MCF 10A (cell line): ENCODE measurements at regions of chr10 and their contacts with region 1.

Region 1: DNA sequence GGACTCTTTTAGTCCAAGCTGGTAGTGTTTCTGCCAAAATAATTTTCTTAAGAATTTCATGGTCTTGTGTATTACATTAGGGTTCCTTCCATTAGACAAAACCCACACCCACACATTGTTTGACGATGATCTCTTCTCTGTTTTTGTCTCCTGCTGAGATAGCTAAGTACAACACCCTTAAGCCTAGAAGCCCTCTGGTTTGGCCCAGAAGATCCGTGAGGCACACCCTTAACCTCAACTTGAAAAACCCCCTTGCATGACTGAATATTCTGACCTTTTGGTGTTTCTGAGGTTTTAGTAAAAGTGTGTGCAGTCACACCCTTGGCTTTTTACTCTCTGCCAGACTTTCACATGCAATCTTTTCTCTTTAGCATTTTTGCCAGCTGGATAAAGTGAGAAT is 29.3 kb upstream of the ERCC6 start:
- DNase-seq: peak; percentile 29
- H3K4me3 Mint-ChIP-seq: peak overlapping the region; percentile 65
- H3K27ac Mint-ChIP-seq: peak overlapping the region; percentile 88
- H3K4me1 Mint-ChIP-seq: peaks cover 56% of the 10 kb centered on the region
- H3K27me3 Mint-ChIP-seq: no peaks in the 10 kb centered on the region
- CTCF ChIP-seq: no peak

Region 2: DNA sequence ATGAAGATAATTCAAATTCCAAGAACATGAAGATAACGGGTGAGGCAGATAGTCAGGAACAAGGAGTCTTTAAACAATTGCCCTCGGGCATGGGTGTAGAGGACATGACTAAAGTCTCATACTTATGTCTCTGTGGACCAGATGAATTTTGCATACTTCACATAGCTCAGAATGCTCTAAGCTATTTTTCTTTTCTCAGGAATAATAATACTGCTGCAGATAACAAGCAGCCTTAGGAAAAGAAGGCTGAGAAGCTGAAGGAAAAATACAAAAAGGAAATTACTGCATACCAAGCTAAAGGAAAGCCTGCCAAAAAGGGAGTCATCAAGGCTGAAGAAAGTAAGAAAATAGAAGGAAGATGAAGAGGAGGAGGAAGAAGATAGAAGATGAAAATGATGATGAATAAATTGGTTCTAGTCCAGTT is 16.0 kb before region 1 on chr10:
- CTCF ChIA-PET with region 1: interaction called, 20 read pairs
- POLR2A ChIA-PET with region 1: interaction called, 205 read pairs
- intact Hi-C with region 1: loop called (anchors 2 kb)
- DNase-seq: peak; percentile 72
- H3K4me3 Mint-ChIP-seq: peak overlapping the region; percentile 13
- H3K27ac Mint-ChIP-seq: peak overlapping the region; percentile 82
- H3K4me1 Mint-ChIP-seq: peaks cover 46% of the 10 kb centered on the region
- H3K27me3 Mint-ChIP-seq: no peaks in the 10 kb centered on the region
- CTCF ChIP-seq: no peak

Region 3: GRCh38 chr10:49579621-49580020 is 11.4 kb after region 1 on chr10:
- CTCF ChIA-PET with region 1: no interaction called
- POLR2A ChIA-PET with region 1: interaction called, 12 read pairs
- intact Hi-C with region 1: no loop called
- DNase-seq: no peak
- H3K4me3 Mint-ChIP-seq: no peak overlapping the region
- H3K27ac Mint-ChIP-seq: no peak overlapping the region
- H3K4me1 Mint-ChIP-seq: peaks cover 30% of the 10 kb centered on the region
- H3K27me3 Mint-ChIP-seq: no peaks in the 10 kb centered on the region
- CTCF ChIP-seq: no peak

Region 4: DNA sequence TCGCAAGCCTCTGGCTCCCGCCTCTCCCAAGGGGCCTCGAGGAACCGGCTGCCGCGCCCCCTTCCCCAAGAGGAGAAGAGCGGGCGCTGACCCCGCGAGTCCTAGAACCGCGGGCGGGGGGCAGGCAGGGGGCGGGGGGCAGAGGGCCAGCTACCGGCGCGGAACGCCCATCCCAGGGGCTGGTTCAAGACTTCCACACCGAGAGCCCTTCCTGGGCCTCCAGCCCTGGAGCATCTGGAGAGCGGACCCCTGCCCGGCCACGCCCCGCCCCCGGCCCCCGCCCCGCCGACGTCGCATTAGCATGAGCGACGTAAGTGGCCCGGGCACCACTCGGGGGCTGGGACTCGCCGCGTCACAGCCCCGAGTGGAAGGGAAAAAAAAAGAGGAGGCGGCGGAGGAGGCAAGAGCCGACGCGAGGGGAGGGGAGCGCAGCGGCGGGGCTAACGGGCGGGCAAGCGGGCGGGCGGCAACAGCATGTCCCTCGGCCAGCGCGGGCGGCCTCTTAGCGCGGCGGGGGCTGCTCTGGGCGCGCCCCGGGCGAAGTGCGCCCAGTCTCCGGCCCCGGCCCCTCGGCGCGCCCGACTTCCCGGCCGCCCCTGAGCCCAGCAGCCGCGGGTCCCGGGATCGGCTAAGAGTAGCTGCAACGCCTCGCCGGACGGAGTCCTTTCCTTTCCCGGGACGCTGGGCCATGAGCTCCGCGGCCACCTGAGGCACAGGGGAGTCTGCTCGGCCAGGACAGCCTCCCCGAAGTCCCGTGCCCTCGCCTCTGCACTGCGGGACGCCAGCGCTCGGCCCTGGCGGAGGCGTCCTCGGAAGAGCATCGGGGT is 41.9 kb after region 1 on chr10 and contains the start of gene SLC18A3:
- CTCF ChIA-PET with region 1: no interaction called
- POLR2A ChIA-PET with region 1: no interaction called
- intact Hi-C with region 1: no loop called
- DNase-seq: no peak
- H3K4me3 Mint-ChIP-seq: no peak within 1 kb of the TSS
- H3K27ac Mint-ChIP-seq: no peak within 1 kb of the TSS
- H3K4me1 Mint-ChIP-seq: peaks cover 16% of the 10 kb centered on the region
- H3K27me3 Mint-ChIP-seq: peaks cover 71% of the 10 kb centered on the region
- CTCF ChIP-seq: no peak
- total RNA-seq, gene SLC18A3: not detected in 2 replicates

Region 5: GRCh38 chr10:49761789-49762565 is 193.7 kb after region 1 on chr10 and contains the start of gene OGDHL:
- CTCF ChIA-PET with region 1: no interaction called
- POLR2A ChIA-PET with region 1: no interaction called
- intact Hi-C with region 1: no loop called
- DNase-seq: peak; percentile 54
- H3K4me3 Mint-ChIP-seq: peak within 1 kb of the TSS; percentile 62
- H3K27ac Mint-ChIP-seq: no peak within 1 kb of the TSS
- H3K4me1 Mint-ChIP-seq: peaks cover 6% of the 10 kb centered on the region
- H3K27me3 Mint-ChIP-seq: peaks cover 36% of the 10 kb centered on the region
- CTCF ChIP-seq: no peak
- total RNA-seq, gene OGDHL: 0.22 and 0.28 TPM in 2 replicates